Activated CD4-positive, alpha-beta T cell treated with anti-CD3 and anti-CD28 coated beads, Interleukin-2, amount 10 ng/mL, durations not matched to agents 7 days and 5 days (primary cell): ENCODE measurements at regions of chr11 and their contacts with region 1.

Region 1: DNA sequence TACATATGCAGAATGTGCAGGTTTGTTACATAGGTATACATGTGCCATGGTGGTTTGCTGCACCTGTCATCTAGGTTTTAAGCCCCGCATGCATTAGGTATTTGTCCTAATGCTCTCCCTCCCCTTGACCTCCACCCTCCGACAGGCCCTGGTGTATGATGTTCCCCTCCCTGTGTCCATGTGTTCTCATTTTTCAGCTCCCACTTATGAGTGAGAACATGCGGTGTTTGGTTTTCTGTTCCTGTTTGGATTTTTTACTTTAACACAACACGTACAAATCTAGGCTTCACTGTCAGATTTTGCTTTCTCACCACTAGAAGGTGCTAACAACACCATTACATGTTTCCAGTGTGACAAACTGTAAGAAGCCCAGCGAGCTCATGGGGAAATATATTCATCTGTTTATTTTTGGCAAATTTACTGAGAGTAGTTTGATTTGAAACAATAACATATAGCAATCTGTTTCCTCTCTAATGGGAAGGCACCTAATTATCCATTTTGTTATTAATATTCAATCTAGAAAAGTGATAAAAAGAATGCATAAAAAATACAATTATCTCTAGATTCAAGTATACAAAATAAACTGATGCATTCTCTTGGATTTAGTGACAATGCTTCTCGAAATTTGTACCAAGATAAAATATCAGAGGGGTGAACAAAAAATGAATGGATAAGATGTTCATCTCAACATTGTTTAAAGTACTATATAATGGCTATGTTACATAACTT is 23.2 kb upstream of the BIRC3 start:
- DNase-seq: peak; percentile 49
- H3K4me3 Mint-ChIP-seq: peak overlapping the region; percentile 71
- H3K27ac Mint-ChIP-seq: peak overlapping the region; percentile 88
- H3K4me1 Mint-ChIP-seq: peaks cover 24% of the 10 kb centered on the region
- H3K27me3 Mint-ChIP-seq: no peaks in the 10 kb centered on the region

Region 2: GRCh38 chr11:102306048-102306585 is 12.1 kb after region 1 on chr11:
- CTCF ChIA-PET with region 1: interaction called, 35 read pairs
- POLR2A ChIA-PET with region 1: no interaction called
- DNase-seq: no peak
- H3K4me3 Mint-ChIP-seq: peak overlapping the region; percentile 35
- H3K27ac Mint-ChIP-seq: peak overlapping the region; percentile 78
- H3K4me1 Mint-ChIP-seq: peaks cover 56% of the 10 kb centered on the region
- H3K27me3 Mint-ChIP-seq: no peaks in the 10 kb centered on the region

Region 3: DNA sequence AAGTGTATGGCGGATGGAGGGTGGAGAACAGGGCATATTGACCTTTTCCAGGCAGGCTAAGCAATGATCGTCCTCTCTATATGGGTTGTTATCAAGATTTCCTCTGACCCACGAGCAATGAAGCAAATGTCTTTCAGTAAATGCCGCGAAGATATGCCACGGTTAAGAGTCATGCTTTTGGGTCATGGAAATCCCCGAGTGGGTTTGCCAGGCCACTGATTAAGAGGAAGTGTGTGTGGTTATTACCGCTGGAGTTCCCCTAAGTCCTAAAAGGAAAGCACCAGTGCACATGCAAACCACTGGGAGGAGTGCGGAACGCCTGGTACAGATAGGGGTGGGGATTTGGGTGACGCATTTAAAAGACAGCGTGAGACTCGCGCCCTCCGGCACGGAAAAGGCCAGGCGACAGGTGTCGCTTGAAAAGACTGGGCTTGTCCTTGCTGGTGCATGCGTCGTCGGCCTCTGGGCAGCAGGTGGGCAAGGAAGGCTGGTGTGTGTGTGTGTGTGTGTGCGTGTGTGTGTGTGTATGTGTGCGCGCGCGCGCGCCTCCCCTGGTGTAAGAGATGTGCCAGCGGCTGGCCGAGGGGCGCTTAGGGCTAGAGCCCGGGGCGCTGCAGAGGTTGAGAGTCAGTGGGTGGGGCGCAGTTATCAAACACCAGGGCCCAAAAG is 23.2 kb after region 1 on chr11 and contains the start of gene BIRC3:
- CTCF ChIA-PET with region 1: interaction called, 35 read pairs
- POLR2A ChIA-PET with region 1: no interaction called
- DNase-seq: peak; percentile 94
- H3K4me3 Mint-ChIP-seq: peak within 1 kb of the TSS; percentile 91
- H3K27ac Mint-ChIP-seq: peak within 1 kb of the TSS; percentile 98
- H3K4me1 Mint-ChIP-seq: peaks cover 80% of the 10 kb centered on the region
- H3K27me3 Mint-ChIP-seq: no peaks in the 10 kb centered on the region
- total RNA-seq, gene BIRC3: 33.1 to 39.6 TPM

Region 4: DNA sequence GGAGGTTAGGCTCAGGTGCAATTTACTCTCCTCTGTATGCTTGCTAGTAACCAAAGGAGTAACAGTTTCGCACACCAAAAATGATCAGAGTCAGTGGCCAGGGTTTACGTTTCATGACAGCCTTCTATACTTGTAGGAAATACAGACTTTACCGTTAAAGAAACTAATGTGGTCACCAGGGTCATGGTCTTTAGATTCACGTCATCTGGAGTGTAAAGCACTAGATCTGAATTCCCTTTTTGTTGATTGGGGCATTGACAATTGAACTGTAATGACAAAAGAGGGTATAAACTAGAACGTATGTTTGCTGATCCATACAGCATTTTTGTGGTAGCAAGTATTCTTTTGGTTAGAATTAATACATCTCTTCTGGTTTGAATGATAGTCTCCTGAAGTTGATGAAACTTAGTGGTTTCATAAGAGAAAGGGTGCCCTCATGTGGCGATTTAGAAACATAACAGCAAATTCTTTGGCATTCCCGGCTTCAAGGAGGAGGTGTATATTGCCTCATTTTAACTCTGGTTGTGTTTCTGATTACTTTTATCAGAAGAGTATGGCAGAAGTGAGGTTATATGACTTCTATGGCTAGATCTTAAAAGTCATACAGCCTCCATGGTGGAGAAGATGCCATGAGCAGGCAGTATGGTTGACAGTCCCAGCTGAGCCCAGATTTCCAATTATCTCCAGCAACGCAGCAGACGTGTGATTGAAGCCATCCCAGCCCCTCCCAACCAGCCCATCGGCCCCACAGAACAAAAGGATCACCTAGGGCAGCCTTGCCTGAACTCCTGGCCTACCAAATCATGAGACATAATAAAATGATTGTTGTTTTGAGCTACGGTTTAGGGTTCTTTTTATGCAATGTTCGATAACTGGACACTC is 201.4 kb after region 1 on chr11:
- CTCF ChIA-PET with region 1: interaction called, 10 read pairs
- POLR2A ChIA-PET with region 1: no interaction called
- DNase-seq: peak; percentile 70
- H3K4me3 Mint-ChIP-seq: no peak overlapping the region
- H3K27ac Mint-ChIP-seq: peak overlapping the region; percentile 7
- H3K4me1 Mint-ChIP-seq: peaks cover 18% of the 10 kb centered on the region
- H3K27me3 Mint-ChIP-seq: peaks cover 17% of the 10 kb centered on the region